Transverse colon (tissue), 4 donors: ENCODE measurements at regions of chr6 and their contacts with region 1.

Region 1: DNA sequence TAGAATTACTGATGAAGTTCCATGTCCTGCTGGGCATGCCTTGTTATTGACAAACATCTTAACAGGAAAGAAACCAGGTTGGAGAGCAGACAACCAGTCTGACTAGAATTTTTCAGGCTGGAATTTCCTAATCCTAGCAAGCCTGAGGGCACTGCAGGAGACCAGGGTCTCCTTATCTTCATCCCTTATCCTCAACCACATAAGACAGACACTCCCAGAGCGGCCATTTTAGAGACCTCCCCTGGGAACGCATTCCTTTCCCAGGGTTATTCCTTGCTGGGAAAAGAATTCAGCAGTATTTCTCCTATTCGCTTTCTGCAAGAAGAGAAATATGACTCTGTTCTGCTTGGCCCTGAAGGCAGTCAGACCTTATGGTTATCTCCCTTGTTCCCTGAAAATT is 803.7 kb downstream of the GRIK2 start:
- DNase-seq: no peak
- H3K4me3 ChIP-seq: no peak overlapping the region
- H3K27ac ChIP-seq: no peak overlapping the region
- H3K4me1 ChIP-seq: no peaks in the 10 kb centered on the region
- H3K27me3 ChIP-seq: no peaks in the 10 kb centered on the region
- CTCF ChIP-seq: no peak
- EP300 ChIP-seq: no peak
- POLR2A ChIP-seq: no peak

Region 2: GRCh38 chr6:101926149-101926925 is 270.9 kb before region 1 on chr6:
- in situ Hi-C with region 1: no loop called
- intact Hi-C with region 1: no loop called
- DNase-seq: no peak
- H3K4me3 ChIP-seq: no peak overlapping the region
- H3K27ac ChIP-seq: no peak overlapping the region
- H3K4me1 ChIP-seq: no peaks in the 10 kb centered on the region
- H3K27me3 ChIP-seq: no peaks in the 10 kb centered on the region
- CTCF ChIP-seq: no peak
- EP300 ChIP-seq: no peak
- POLR2A ChIP-seq: no peak

Region 3: DNA sequence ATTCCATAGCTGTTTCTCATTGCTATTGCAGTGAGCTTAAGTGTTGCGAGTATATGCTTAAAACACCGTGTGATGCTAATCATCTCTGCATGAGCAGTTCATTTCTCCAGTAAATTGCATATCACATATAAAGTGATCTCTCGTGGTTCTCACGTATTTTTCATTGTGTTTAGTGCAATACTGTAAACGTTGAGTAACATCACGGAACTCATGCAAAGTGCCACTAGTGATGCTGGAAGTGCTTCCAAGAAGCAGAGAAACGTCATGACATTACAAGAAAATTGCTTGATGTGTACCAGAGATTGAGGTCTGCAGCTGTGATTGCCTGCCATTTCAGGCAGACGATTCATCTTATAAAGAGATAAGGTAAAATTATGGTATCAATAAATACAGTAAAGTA is 26.7 kb after region 1 on chr6:
- in situ Hi-C with region 1: no loop called
- intact Hi-C with region 1: loop called (anchors 1 kb)
- DNase-seq: no peak
- H3K4me3 ChIP-seq: no peak overlapping the region
- H3K27ac ChIP-seq: no peak overlapping the region
- H3K4me1 ChIP-seq: no peaks in the 10 kb centered on the region
- H3K27me3 ChIP-seq: no peaks in the 10 kb centered on the region
- CTCF ChIP-seq: no peak
- EP300 ChIP-seq: no peak
- POLR2A ChIP-seq: no peak

Region 4: GRCh38 chr6:102732908-102733586 is 535.8 kb after region 1 on chr6:
- in situ Hi-C with region 1: no loop called
- intact Hi-C with region 1: no loop called
- DNase-seq: no peak
- H3K4me3 ChIP-seq: no peak overlapping the region
- H3K27ac ChIP-seq: no peak overlapping the region
- H3K4me1 ChIP-seq: no peaks in the 10 kb centered on the region
- H3K27me3 ChIP-seq: no peaks in the 10 kb centered on the region
- CTCF ChIP-seq: no peak
- EP300 ChIP-seq: no peak
- POLR2A ChIP-seq: no peak